OCI-LY7 (cell line): ENCODE measurements at regions of chr16 and their contacts with region 1.

Region 1: GRCh38 chr16:66406534-66407221 is 20.4 kb upstream of the BEAN1 start:
- DNase-seq: peak; percentile 82
- H3K4me3 ChIP-seq: peak overlapping the region; percentile 59
- H3K27ac ChIP-seq: no peak overlapping the region
- H3K4me1 ChIP-seq: peaks cover 15% of the 10 kb centered on the region
- CTCF ChIP-seq: peak; percentile 90

Region 2: GRCh38 chr16:66091471-66091891 is 315.2 kb before region 1 on chr16:
- CTCF ChIA-PET with region 1: no interaction called
- POLR2A ChIA-PET with region 1: no interaction called
- intact Hi-C with region 1: no loop called
- DNase-seq: no peak
- H3K4me3 ChIP-seq: no peak overlapping the region
- H3K27ac ChIP-seq: no peak overlapping the region
- H3K4me1 ChIP-seq: no peaks in the 10 kb centered on the region
- CTCF ChIP-seq: no peak

Region 3: GRCh38 chr16:66335704-66336329 is 70.9 kb before region 1 on chr16:
- CTCF ChIA-PET with region 1: no interaction called
- POLR2A ChIA-PET with region 1: no interaction called
- intact Hi-C with region 1: no loop called
- DNase-seq: no peak
- H3K4me3 ChIP-seq: no peak overlapping the region
- H3K27ac ChIP-seq: no peak overlapping the region
- H3K4me1 ChIP-seq: no peaks in the 10 kb centered on the region
- CTCF ChIP-seq: no peak

Region 4: GRCh38 chr16:66483689-66484481 is 77.2 kb after region 1 on chr16:
- CTCF ChIA-PET with region 1: interaction called, 3 read pairs
- POLR2A ChIA-PET with region 1: interaction called, 4 read pairs
- intact Hi-C with region 1: loop called (anchors 1 kb)
- DNase-seq: peak; percentile 77
- H3K4me3 ChIP-seq: no peak overlapping the region
- H3K27ac ChIP-seq: no peak overlapping the region
- H3K4me1 ChIP-seq: peaks cover 6% of the 10 kb centered on the region
- CTCF ChIP-seq: peak; percentile 99

Region 5: DNA sequence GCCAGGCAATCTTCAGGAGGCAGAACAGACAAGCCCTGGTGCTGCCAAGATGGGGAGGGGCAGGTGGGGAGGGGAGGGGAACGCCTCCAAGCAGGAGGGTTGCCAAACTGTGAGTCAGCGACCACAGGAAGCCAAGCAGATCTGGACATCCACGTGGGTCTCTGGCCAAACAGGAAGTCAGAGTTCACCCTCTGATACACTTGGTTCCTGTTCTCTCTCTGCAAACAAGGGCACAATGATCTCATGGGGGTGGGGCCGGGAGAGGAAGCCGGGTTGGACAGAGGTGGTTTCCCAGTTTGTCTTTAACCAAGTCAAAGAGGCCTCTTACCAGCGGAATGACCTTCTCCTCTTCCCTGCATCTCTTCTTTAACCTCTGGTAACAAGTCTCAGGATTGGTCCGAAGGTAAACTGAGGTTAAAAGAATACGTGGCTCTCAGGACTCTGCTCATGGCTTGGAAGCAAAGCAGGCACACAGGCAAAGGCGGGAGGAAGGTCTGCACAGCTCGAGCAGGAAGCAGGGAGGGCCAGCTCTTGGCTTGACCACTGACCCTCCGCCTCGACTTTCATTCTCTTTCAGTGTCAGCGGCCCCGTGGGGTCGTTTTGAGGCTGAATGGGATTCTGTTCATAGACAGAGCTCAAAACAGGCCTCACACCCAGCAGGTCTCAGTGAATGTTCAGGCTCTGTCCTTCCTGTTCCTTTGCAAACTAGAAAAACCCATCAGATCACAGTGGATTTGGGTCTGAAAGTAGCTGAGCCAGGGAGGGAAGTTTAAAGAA is 110.3 kb after region 1 on chr16:
- CTCF ChIA-PET with region 1: no interaction called
- POLR2A ChIA-PET with region 1: interaction called, 3 read pairs
- intact Hi-C with region 1: loop called (anchors 1 kb)
- DNase-seq: peak; percentile 95
- H3K4me3 ChIP-seq: peak overlapping the region; percentile 58
- H3K27ac ChIP-seq: peak overlapping the region; percentile 68
- H3K4me1 ChIP-seq: peaks cover 39% of the 10 kb centered on the region
- CTCF ChIP-seq: no peak

Region 6: DNA sequence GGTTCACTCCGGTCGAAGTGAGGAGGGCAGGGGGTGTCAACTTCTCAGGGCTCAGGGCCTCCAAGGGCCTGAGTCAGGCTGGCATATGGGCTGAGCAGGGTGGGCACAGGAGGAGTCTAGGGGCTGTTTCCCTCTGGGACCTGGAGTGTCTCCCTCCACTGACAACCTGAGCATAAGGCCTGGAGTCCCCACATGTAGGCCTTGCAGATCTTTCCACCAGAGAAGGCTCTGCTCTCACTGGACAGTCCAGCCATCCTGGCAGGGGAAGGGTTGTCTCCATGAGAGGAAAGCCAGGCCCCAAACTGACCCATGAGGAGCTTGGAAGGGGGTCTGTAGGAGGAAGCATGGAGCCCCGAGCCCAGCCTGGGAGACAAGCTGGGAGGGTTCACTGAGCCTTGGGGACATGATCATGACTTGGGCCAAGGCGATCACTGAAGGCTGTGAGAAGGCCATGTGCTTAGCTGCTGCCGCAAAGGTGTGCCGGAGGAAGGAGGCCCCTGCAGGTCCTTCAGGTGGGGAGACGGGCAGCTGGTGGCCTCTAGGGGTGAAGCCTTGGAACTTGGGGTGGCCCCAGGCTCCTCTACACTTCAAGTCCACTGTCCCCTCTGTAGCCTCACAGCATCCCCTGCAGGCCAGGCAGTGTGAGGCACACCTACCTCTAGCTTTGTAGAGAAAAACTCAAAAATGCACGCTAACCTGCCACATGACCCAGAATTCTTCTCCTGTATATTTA is 182.5 kb after region 1 on chr16:
- CTCF ChIA-PET with region 1: interaction called, 4 read pairs
- POLR2A ChIA-PET with region 1: no interaction called
- intact Hi-C with region 1: loop called (anchors 1 kb)
- DNase-seq: peak; percentile 75
- H3K4me3 ChIP-seq: no peak overlapping the region
- H3K27ac ChIP-seq: no peak overlapping the region
- H3K4me1 ChIP-seq: peaks cover 25% of the 10 kb centered on the region
- CTCF ChIP-seq: peak; percentile 87

Region 7: GRCh38 chr16:66608241-66609138 is 201.8 kb after region 1 on chr16:
- CTCF ChIA-PET with region 1: no interaction called
- POLR2A ChIA-PET with region 1: interaction called, 4 read pairs
- intact Hi-C with region 1: loop called (anchors 5 kb)
- DNase-seq: peak; percentile 83
- H3K4me3 ChIP-seq: no peak overlapping the region
- H3K27ac ChIP-seq: peak overlapping the region; percentile 45
- H3K4me1 ChIP-seq: peaks cover 40% of the 10 kb centered on the region
- CTCF ChIP-seq: peak; percentile 98

Region 8: GRCh38 chr16:66728117-66728787 is 321.6 kb after region 1 on chr16:
- CTCF ChIA-PET with region 1: no interaction called
- POLR2A ChIA-PET with region 1: interaction called, 3 read pairs
- intact Hi-C with region 1: loop called (anchors 10 kb)
- DNase-seq: peak; percentile 74
- H3K4me3 ChIP-seq: no peak overlapping the region
- H3K27ac ChIP-seq: peak overlapping the region; percentile 0
- H3K4me1 ChIP-seq: no peaks in the 10 kb centered on the region
- CTCF ChIP-seq: peak; percentile 89

Region 9: DNA sequence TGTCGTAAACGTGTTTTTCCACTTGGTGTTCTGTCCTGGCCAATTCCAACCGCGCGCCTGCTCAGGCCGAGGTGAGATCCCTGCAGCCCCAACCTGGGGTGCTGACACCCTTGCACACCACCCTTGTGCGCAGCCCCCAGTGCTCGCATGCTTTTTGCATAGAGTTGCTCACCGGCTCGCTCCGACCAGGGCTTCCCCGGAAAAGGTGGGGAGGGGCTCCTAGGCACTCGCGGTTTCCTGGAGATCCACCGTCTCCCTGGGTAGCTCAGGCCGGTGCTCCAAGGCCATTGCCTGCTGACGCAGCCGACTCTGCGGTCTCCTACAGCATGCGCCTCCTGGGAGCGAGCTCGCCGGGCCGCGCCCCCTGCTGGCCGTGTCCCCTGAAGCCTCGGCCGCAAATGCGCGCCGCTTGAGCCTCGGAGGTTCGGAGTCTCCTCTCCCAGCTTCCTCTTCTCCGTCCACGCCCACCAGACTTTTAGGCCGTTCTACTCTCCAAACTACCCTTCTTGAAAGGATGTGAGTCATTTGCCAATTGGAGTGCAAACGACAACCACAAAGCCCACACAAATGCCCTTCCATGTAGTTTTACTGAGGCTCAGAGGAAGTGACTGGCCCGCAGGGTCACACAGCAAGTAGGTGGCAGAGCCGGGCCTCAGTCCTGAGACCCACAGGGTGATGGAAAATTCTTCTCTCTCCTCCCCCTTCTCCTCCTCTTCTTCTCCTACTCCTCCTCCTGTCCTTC is 466.4 kb after region 1 on chr16:
- CTCF ChIA-PET with region 1: interaction called, 5 read pairs
- POLR2A ChIA-PET with region 1: no interaction called
- intact Hi-C with region 1: loop called (anchors 2 kb)
- DNase-seq: peak; percentile 88
- H3K4me3 ChIP-seq: peak overlapping the region; percentile 37
- H3K27ac ChIP-seq: peak overlapping the region; percentile 42
- H3K4me1 ChIP-seq: peaks cover 37% of the 10 kb centered on the region
- CTCF ChIP-seq: peak; percentile 99